ENCODE measurements at regions of chr11 and their contacts with region 1.

Region 1: DNA sequence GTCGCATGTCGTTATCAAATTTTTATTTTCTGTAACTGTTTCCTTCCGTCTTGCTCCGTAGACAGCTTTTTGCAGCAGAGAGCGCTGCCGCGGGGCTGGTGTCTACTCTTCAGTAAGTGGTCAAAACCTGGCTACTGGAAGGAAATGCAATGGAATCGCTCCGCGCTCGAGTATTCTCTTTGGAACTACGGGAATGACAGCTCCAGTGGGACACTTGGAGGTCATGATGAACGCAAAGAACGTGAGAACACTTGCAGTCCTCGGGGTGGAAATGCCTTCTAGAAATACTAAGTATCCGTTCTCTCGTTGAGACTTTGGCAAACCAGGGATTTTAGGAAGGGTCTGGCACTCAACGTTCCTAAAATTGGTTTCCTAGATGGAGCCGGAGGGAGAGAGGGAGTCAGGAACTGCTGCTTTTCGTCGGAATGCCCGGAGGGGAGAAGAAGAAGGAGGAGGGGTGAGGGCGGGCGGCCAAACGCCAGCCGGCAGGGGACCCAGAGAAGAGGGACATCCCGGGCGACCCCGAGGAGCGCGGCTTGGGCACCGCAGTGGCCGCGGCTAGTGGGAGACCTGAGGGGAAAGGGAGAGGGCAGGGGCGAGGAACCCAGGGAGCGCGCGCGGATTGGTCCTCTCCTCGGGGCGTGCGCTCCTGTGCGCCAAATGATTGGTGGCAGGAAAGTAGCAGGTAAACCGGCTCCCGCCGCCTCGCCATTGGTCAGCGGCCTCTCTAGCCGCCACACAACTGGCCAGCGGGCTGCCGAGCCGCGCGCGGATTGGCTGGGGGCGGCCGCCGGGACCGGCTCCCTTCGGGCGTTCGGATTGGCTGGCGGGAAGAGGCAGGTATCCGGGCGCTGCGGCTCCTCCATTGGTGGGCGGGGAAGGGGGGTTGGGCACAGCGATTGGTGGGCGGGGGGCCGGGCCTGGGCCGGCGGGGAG is 490 bp upstream of the BMAL1 start:
- DNase-seq: peak; percentile 97 to 98
- ATAC-seq: peak; percentile 78 to 92 (median 82)
- H3K4me3 ChIP-seq: peak overlapping the region; percentile 73
- H3K4me3 Mint-ChIP-seq: peak overlapping the region; percentile 99
- H3K27ac ChIP-seq: peak overlapping the region; percentile 54
- H3K27ac Mint-ChIP-seq: peak overlapping the region; percentile 95 to 98
- H3K4me1 ChIP-seq: peaks cover 36% of the 10 kb centered on the region
- H3K4me1 Mint-ChIP-seq: peaks cover 50 to 55% of the 10 kb centered on the region in 2 donors
- H3K27me3 ChIP-seq: peaks cover 2% of the 10 kb centered on the region
- H3K27me3 Mint-ChIP-seq: peaks cover 15 to 23% of the 10 kb centered on the region in 2 donors
- CTCF ChIP-seq: no peak

Region 2: GRCh38 chr11:12216671-12217374 is 1060.3 kb before region 1 on chr11:
- intact Hi-C with region 1: loop called (anchors 5 kb)
- DNase-seq: no peak
- ATAC-seq: peak; percentile 17 to 44 (median 35)
- H3K4me3 ChIP-seq: no peak overlapping the region
- H3K4me3 Mint-ChIP-seq: peak overlapping the region; percentile 70
- H3K27ac ChIP-seq: peak overlapping the region; percentile 28
- H3K27ac Mint-ChIP-seq: peak overlapping the region; percentile 83 to 90
- H3K4me1 ChIP-seq: peaks cover 49% of the 10 kb centered on the region
- H3K4me1 Mint-ChIP-seq: peaks cover 48 to 51% of the 10 kb centered on the region in 2 donors
- H3K27me3 ChIP-seq: no peaks in the 10 kb centered on the region
- H3K27me3 Mint-ChIP-seq: peaks cover 8 to 14% of the 10 kb centered on the region in 2 donors
- CTCF ChIP-seq: no peak

Region 3: DNA sequence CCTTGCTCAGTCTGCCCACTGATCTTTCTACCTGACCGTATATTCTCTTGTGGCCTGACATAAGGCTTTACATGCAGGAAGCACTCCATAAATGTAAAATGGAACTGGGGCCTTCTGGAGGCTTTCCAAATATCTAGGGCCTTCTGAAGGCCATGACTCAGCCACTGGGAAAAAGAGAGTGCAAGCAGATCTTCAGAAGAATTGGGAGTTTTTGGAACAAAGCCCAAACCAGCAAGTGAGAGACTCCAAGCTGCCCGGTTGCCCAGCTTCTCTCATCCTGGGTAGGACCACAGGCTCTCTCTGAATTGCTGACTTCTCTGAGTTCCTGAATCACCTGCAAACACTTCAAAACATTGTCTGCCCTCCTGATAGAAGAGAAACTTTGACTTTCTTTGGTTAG is 107.4 kb before region 1 on chr11:
- intact Hi-C with region 1: no loop called
- DNase-seq: no peak
- ATAC-seq: no peak
- H3K4me3 ChIP-seq: no peak overlapping the region
- H3K4me3 Mint-ChIP-seq: no peak overlapping the region
- H3K27ac ChIP-seq: no peak overlapping the region
- H3K27ac Mint-ChIP-seq: no peak overlapping the region
- H3K4me1 ChIP-seq: no peaks in the 10 kb centered on the region
- H3K4me1 Mint-ChIP-seq: no peaks in the 10 kb centered on the region
- H3K27me3 ChIP-seq: peaks cover 2% of the 10 kb centered on the region
- H3K27me3 Mint-ChIP-seq: peaks cover 9 to 28% of the 10 kb centered on the region in 2 donors
- CTCF ChIP-seq: no peak

Region 4: GRCh38 chr11:13316528-13316961 is 39.4 kb after region 1 on chr11:
- intact Hi-C with region 1: loop called (anchors 5 kb)
- DNase-seq: no peak
- ATAC-seq: peak in 1 of 3 donors; percentile 14
- H3K4me3 ChIP-seq: no peak overlapping the region
- H3K4me3 Mint-ChIP-seq: peak overlapping the region; percentile 43
- H3K27ac ChIP-seq: no peak overlapping the region
- H3K27ac Mint-ChIP-seq: peak overlapping the region; percentile 82 to 84
- H3K4me1 ChIP-seq: peaks cover 52% of the 10 kb centered on the region
- H3K4me1 Mint-ChIP-seq: peaks cover 42 to 82% of the 10 kb centered on the region in 2 donors
- H3K27me3 ChIP-seq: no peaks in the 10 kb centered on the region
- H3K27me3 Mint-ChIP-seq: no peaks in the 10 kb centered on the region
- CTCF ChIP-seq: no peak

Region 5: DNA sequence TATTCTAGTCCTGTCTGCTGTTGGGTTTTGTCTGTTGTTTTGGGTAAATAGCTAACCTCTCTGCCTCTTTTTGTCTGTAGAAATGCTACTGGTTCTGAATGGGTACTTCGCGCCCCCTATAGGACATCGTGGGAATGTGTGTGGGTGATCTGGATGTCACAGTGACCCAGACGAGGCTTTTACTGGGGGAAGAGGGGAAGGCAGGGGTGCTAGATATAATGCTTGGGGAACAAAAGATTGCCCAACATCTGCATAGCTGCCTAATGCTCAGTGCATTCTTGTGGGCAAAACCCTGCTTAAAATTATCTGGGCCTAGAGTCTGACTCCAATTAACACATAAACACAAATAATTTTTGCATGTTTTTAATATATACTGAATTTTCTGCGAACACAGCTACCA is 58.2 kb after region 1 on chr11:
- intact Hi-C with region 1: loop called (anchors 1 kb)
- DNase-seq: peak; percentile 62 to 86
- ATAC-seq: peak; percentile 65 to 73 (median 72)
- H3K4me3 ChIP-seq: no peak overlapping the region
- H3K4me3 Mint-ChIP-seq: no peak overlapping the region
- H3K27ac ChIP-seq: no peak overlapping the region
- H3K27ac Mint-ChIP-seq: peak overlapping the region; percentile 79 to 86
- H3K4me1 ChIP-seq: peaks cover 50% of the 10 kb centered on the region
- H3K4me1 Mint-ChIP-seq: peaks cover 80 to 81% of the 10 kb centered on the region in 2 donors
- H3K27me3 ChIP-seq: no peaks in the 10 kb centered on the region
- H3K27me3 Mint-ChIP-seq: no peaks in the 10 kb centered on the region
- CTCF ChIP-seq: peak; percentile 95

Region 6: GRCh38 chr11:13343931-13344717 is 67.0 kb after region 1 on chr11:
- intact Hi-C with region 1: loop called (anchors 2 kb)
- DNase-seq: peak; percentile 61 to 86
- ATAC-seq: peak; percentile 72 to 78 (median 76)
- H3K4me3 ChIP-seq: no peak overlapping the region
- H3K4me3 Mint-ChIP-seq: peak overlapping the region; percentile 3
- H3K27ac ChIP-seq: no peak overlapping the region
- H3K27ac Mint-ChIP-seq: peak overlapping the region; percentile 1 to 64
- H3K4me1 ChIP-seq: peaks cover 23% of the 10 kb centered on the region
- H3K4me1 Mint-ChIP-seq: peaks cover 89 to 92% of the 10 kb centered on the region in 2 donors
- H3K27me3 ChIP-seq: no peaks in the 10 kb centered on the region
- H3K27me3 Mint-ChIP-seq: no peaks in the 10 kb centered on the region
- CTCF ChIP-seq: peak; percentile 82

Region 7: DNA sequence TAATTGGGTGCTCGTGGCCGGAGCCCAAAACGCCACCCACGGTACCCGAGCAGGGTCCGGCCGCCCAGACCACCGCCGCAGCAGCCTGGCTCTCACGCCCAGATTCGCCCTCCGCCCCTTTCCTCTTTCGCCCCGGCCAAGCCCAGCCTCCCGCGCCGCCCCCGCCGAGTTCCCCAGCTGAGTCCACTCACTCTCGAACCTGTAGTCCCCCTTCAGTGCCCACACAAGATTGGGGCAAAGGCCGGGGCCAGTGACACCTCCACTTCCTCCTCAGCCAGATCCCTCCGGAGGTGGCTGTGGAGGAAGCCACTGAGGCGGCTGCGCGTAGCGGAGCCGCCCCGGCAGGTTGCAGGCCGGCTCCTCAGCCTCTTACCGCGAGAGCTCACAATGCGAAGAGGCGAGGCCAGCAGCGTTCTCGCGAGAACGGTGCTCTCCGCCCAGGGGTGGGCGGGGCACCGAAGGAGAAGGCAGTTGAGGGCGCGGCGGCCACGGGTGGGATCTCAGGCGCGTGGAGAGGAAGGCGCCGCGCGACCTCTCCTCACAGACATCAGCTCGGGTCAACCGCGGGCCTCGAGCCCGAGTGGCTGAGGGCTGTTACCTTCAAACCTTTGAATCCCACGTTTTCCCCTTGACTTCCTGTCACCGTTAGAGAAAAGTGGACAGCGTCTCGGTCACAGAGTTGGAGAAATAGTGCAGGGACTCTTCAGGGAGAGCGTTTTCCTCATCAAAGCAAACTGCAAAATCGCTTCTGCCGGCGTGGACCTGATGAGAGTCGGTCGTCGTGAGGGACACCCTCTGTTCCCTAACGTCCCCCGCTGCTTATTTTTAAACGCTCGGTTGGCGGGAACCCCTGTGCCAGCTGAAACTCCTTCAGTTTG is 186.0 kb after region 1 on chr11 and contains the start of gene BTBD10:
- intact Hi-C with region 1: loop called (anchors 5 kb)
- DNase-seq: peak; percentile 87 to 98
- ATAC-seq: peak; percentile 98 to 100 (median 99)
- H3K4me3 ChIP-seq: peak within 1 kb of the TSS; percentile 99
- H3K4me3 Mint-ChIP-seq: peak within 1 kb of the TSS; percentile 96
- H3K27ac ChIP-seq: peak within 1 kb of the TSS; percentile 88
- H3K27ac Mint-ChIP-seq: peak within 1 kb of the TSS; percentile 90 to 100
- H3K4me1 ChIP-seq: peaks cover 14% of the 10 kb centered on the region
- H3K4me1 Mint-ChIP-seq: peaks cover 47 to 49% of the 10 kb centered on the region in 2 donors
- H3K27me3 ChIP-seq: no peaks in the 10 kb centered on the region
- H3K27me3 Mint-ChIP-seq: peaks cover 0 to 4% of the 10 kb centered on the region in 2 donors
- CTCF ChIP-seq: no peak
- total RNA-seq, gene BTBD10: 18.0 to 26.9 (median 23.2) TPM

Region 8: DNA sequence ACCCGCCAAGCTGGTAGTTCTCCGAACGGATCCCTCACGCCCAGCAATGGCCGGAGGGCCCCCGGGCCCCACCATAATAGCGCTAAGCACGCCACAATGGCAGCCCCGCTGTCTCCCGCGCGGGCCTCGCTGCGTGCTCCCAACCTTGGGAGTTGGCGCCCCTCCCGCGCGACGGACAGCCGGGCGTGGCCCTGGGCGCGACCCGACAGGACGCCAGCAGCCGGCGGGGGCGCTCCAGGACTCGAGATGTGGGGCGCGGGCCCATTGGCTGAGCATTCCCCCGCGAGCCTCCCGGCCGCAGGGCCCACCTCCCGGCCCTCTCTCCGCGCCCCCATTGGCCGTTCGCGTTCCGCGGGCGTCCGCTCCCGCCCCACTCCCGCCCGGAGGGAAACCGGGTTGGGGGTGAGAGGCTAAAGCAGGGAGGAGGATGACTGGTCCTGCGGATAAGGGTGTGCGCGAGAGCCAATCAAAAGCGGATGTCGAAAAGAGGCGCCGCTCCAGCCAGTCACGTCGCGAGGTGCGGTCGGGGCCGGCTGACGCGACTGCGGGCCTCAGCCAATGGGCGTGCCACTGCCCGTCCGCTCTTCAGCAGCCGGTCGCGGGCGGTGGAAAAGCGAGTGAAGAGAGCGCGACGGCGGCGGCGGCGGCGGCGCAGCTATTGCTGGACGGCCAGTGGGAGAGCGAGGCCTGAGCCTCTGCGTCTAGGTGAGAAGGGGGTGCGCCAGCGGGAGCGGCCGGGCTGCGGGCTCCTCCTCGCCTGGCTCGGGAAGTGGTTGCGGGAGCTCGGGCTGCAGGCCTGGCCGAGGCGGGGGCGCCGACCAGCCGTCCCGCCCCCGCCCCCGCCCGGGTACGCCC is 391.2 kb after region 1 on chr11 and contains the start of gene FAR1:
- intact Hi-C with region 1: loop called (anchors 5 kb)
- DNase-seq: peak; percentile 94 to 97
- ATAC-seq: peak; percentile 85 to 96 (median 86)
- H3K4me3 ChIP-seq: peak within 1 kb of the TSS; percentile 81
- H3K4me3 Mint-ChIP-seq: peak within 1 kb of the TSS; percentile 99
- H3K27ac ChIP-seq: peak within 1 kb of the TSS; percentile 78
- H3K27ac Mint-ChIP-seq: peak within 1 kb of the TSS; percentile 88 to 97
- H3K4me1 ChIP-seq: peaks cover 20% of the 10 kb centered on the region
- H3K4me1 Mint-ChIP-seq: peaks cover 40 to 52% of the 10 kb centered on the region in 2 donors
- H3K27me3 ChIP-seq: no peaks in the 10 kb centered on the region
- H3K27me3 Mint-ChIP-seq: peaks cover 0 to 8% of the 10 kb centered on the region in 2 donors
- CTCF ChIP-seq: peak; percentile 58
- total RNA-seq, gene FAR1: 59.5 to 74.7 (median 74.6) TPM